HepG2 (cell line): ENCODE measurements at regions of chr12 and their contacts with region 1.

Region 1: DNA sequence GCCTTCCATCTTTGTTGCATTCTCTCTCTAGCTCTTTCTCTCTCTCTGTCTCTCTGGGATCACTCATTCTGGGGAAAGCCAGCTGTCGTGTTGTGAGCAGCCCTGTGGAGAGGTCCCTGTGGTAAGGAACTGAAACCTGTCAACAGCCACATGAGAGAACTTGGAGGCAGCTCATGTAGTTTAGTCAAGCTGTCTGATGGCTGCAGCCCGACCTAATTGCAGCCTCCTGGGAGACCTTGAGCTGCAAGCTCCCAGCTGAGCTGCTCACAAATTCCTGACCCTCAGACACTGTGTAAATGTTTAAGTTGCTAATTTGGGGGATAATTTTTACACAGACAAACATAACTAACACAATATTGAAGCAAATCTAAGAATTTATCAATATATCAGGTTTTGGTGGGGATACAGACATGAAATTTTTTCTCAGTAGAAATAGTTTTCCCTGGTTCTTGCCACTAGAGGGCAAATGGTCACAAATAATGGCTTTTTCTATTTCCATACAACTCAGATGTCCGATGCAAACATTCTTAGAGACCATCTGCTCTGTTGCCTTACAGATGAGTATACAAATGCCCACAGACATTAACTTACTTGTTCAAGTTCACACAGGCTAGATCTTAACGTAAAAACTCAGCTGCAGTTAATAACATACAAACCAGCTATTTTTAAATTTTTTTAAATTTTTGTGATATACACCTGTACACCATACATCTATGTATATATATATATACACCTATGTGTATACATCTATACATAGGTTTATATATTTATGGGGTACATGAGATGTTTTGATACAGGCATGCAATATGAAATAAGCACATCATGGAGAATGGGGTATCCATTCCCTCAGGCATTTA is 15.5 kb upstream of the KRR1 start:
- DNase-seq: peak; percentile 45
- ATAC-seq: peak; percentile 74
- H3K4me3 ChIP-seq: no peak overlapping the region
- H3K27ac ChIP-seq: no peak overlapping the region
- H3K4me1 ChIP-seq: peaks cover 5% of the 10 kb centered on the region; the same call in 1 of the 2 replicates
- H3K27me3 ChIP-seq: no peaks in the 10 kb centered on the region; a peak in 1 of 5 replicates
- CTCF ChIP-seq: peak; percentile 68
- EP300 ChIP-seq: no peak
- POLR2A ChIP-seq: no peak
- RAD21 ChIP-seq: peak; percentile 56

Region 2: DNA sequence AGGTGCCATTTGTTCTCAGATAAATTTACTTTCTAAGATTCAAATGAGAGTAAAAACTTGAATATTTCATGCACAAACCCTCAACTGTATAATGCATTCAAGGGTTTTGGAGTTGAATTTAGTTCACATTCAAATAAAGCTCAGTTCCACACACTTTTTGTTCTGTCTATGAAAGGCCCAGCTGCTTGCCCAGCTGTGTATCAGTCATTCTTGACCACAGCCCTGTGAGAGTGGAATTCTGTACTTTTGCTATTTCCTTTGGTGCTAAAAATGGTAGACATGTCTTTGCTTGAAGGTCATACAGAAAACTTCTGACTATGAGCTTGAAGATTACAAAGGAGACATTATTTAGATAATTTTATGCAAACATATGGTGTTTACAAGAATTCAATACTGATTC is 427.7 kb before region 1 on chr12:
- CTCF ChIA-PET with region 1: no interaction called
- POLR2A ChIA-PET with region 1: no interaction called
- in situ Hi-C with region 1: no loop called
- intact Hi-C with region 1: no loop called
- DNase-seq: no peak
- ATAC-seq: no peak
- H3K4me3 ChIP-seq: no peak overlapping the region
- H3K27ac ChIP-seq: no peak overlapping the region
- H3K4me1 ChIP-seq: no peaks in the 10 kb centered on the region
- H3K27me3 ChIP-seq: no peaks in the 10 kb centered on the region
- CTCF ChIP-seq: no peak
- EP300 ChIP-seq: no peak
- POLR2A ChIP-seq: no peak
- RAD21 ChIP-seq: no peak

Region 3: DNA sequence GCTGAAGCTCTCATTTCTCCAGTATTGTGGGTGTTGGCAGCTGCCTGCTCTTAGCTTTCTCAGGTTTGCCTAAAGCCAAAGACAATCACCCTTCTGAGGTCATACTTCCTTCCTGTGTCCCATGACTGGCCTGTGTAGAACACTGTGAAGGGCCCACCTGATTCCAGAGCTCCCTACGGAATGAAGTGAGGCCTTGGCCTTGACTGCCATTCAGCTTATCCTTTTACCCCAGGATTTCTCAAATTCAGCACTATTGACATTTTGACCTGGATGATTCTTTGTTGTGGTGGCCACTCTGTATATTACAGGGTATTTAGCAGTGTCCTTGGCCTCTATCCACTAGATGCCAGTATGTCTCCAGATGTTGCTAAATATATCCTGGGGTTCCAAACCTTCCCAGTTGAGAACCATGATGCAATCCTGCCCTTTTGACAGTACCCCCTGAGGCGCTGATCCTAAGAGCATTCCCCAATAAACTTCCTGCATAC is 96.8 kb after region 1 on chr12:
- CTCF ChIA-PET with region 1: no interaction called
- POLR2A ChIA-PET with region 1: interaction called, 3 read pairs
- in situ Hi-C with region 1: no loop called
- intact Hi-C with region 1: loop called (anchors 10 kb)
- DNase-seq: peak; percentile 87
- ATAC-seq: peak; percentile 99
- H3K4me3 ChIP-seq: no peak overlapping the region; a peak in 1 of 6 replicates
- H3K27ac ChIP-seq: no peak overlapping the region
- H3K4me1 ChIP-seq: peaks cover 40% of the 10 kb centered on the region
- H3K27me3 ChIP-seq: no peaks in the 10 kb centered on the region
- CTCF ChIP-seq: peak; percentile 82
- EP300 ChIP-seq: peak in 1 of 2 experiments; percentile 91; a peak in 2 of 4 replicates
- POLR2A ChIP-seq: no peak
- RAD21 ChIP-seq: peak; percentile 87

Region 4: GRCh38 chr12:75994186-75994731 is 467.4 kb after region 1 on chr12:
- CTCF ChIA-PET with region 1: no interaction called
- POLR2A ChIA-PET with region 1: no interaction called
- in situ Hi-C with region 1: no loop called
- intact Hi-C with region 1: loop called (anchors 1 kb)
- DNase-seq: no peak
- ATAC-seq: no peak
- H3K4me3 ChIP-seq: no peak overlapping the region
- H3K27ac ChIP-seq: no peak overlapping the region
- H3K4me1 ChIP-seq: peaks cover 44% of the 10 kb centered on the region
- H3K27me3 ChIP-seq: no peaks in the 10 kb centered on the region
- CTCF ChIP-seq: no peak
- EP300 ChIP-seq: no peak
- POLR2A ChIP-seq: no peak
- RAD21 ChIP-seq: no peak

Region 5: GRCh38 chr12:76158518-76159321 is 631.8 kb after region 1 on chr12:
- CTCF ChIA-PET with region 1: interaction called, 5 read pairs
- POLR2A ChIA-PET with region 1: no interaction called
- in situ Hi-C with region 1: no loop called
- intact Hi-C with region 1: loop called (anchors 2 kb)
- DNase-seq: peak; percentile 53
- ATAC-seq: peak; percentile 100
- H3K4me3 ChIP-seq: peak overlapping the region in 1 of 3 experiments; percentile 39; a peak in 1 of 6 replicates
- H3K27ac ChIP-seq: no peak overlapping the region
- H3K4me1 ChIP-seq: 0 out of 2 replicates have a peak, but pooled peaks cover 4% of the 10 kb centered on the region
- H3K27me3 ChIP-seq: no peaks in the 10 kb centered on the region; a peak in 1 of 5 replicates
- CTCF ChIP-seq: peak; percentile 85
- EP300 ChIP-seq: no peak
- POLR2A ChIP-seq: no peak
- RAD21 ChIP-seq: no peak; the same call in 1 of the 2 replicates

Region 6: DNA sequence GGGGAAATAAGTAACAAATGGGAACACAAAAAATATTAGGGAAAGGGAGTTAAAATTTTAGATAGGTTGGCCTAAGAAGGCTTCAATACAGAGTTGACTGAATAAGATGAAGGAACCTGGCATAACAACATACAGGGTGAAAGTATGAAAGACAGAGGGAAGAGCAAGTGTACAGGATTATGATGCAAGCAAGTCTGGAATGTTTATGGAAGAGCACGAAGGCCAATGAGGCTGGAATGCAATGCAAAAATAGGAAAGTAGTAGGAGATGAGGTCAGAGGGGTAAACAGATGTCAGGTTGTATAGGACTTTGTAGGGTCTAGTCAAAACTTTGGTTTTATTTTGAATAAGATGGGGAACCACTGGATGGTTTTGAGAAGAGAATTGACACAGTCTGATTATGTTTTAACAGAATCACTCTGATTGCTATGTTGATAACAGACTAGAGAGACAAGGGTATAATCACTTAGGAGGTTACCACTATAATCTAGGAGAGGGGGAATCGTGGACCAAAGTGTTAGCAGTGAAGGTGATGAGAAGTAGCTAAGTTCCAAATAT is 935.9 kb after region 1 on chr12:
- CTCF ChIA-PET with region 1: no interaction called
- POLR2A ChIA-PET with region 1: no interaction called
- in situ Hi-C with region 1: loop called (anchors 25 kb)
- intact Hi-C with region 1: loop called (anchors 10 kb)
- DNase-seq: peak; percentile 16
- ATAC-seq: peak; percentile 25; the same call in 2 of the 3 replicates
- H3K4me3 ChIP-seq: no peak overlapping the region
- H3K27ac ChIP-seq: no peak overlapping the region
- H3K4me1 ChIP-seq: peaks cover 8% of the 10 kb centered on the region; the same call in 1 of the 2 replicates
- H3K27me3 ChIP-seq: no peaks in the 10 kb centered on the region
- CTCF ChIP-seq: no peak
- EP300 ChIP-seq: no peak
- POLR2A ChIP-seq: no peak
- RAD21 ChIP-seq: no peak